ENCODE measurements at regions of chr2 and their contacts with region 1.

Region 1: GRCh38 chr2:157194097-157194688 is 63.3 kb upstream of the GALNT5 start:
- DNase-seq: no peak
- ATAC-seq: no peak

Region 2: GRCh38 chr2:155377266-155377680 is 1816.9 kb before region 1 on chr2:
- intact Hi-C with region 1: loop called (anchors 5 kb)
- DNase-seq: no peak
- ATAC-seq: no peak

Region 3: GRCh38 chr2:157055660-157056199 is 138.5 kb before region 1 on chr2:
- intact Hi-C with region 1: loop called (anchors 10 kb)
- DNase-seq: no peak
- ATAC-seq: no peak